ENCODE measurements at regions of chr16 and their contacts with region 1.

Region 1: DNA sequence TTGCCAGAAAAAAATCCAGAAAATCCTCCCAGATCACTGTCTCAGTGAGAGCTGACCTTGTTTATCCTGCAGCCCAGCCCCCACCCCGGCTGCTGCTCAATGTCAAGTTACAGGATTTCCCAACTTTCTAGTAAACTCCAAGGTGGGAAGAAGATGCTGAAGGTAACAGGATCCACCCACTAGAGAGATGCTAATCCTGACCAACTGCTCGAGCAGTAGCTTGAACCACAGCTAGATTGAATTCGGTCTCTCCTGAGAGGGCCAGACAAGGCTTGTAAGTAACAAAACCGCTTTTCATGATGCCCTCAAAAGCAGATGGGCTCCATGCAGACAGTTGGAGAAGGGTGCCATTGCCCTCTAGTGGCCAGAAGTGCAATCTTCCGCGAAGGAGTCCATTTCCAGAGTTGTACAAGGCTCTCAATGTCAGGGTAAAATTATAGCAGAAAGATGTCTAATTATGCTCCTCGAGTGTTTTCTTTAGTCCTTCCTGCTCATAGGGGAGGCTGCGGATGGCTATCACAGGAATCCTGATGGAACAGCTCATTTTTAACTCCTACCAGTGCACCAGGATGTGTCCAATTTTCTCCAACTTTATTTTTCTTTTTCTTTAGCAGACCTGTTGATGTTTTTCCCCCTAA is 3.9 kb downstream of the CDH11 start:
- DNase-seq: peak; percentile 60 to 95 (median 88)

Region 2: GRCh38 chr16:65070831-65071432 is 47.0 kb before region 1 on chr16:
- intact Hi-C with region 1: loop called (anchors 5 kb)
- DNase-seq: peak; percentile 55 to 97 (median 88)

Region 3: GRCh38 chr16:65172356-65172755 is 54.4 kb after region 1 on chr16:
- intact Hi-C with region 1: no loop called
- DNase-seq: no peak

Region 4: GRCh38 chr16:65323655-65324237 is 205.8 kb after region 1 on chr16:
- intact Hi-C with region 1: no loop called
- DNase-seq: no peak